ENCODE measurements at regions of chr3 and their contacts with region 1.

Region 1: GRCh38 chr3:170414202-170414663 is 4.4 kb upstream of the CLDN11 start:
- DNase-seq: peak; percentile 39 to 46 (median 43)
- H3K4me3 ChIP-seq: no peak overlapping the region
- H3K4me3 Mint-ChIP-seq: no peak overlapping the region
- H3K27ac ChIP-seq: no peak overlapping the region
- H3K27ac Mint-ChIP-seq: no peak overlapping the region
- H3K4me1 ChIP-seq: peaks cover 11% of the 10 kb centered on the region
- H3K4me1 Mint-ChIP-seq: peaks cover 4 to 5% (median 5%) of the 10 kb centered on the region in 4 donors
- H3K27me3 ChIP-seq: peaks cover 4% of the 10 kb centered on the region
- H3K27me3 Mint-ChIP-seq: peaks cover 18 to 22% of the 10 kb centered on the region in 2 donors

Region 2: GRCh38 chr3:169863458-169863899 is 550.8 kb before region 1 on chr3:
- CTCF ChIA-PET with region 1: no interaction called
- POLR2A ChIA-PET with region 1: no interaction called
- intact Hi-C with region 1: loop called (anchors 1 kb)
- DNase-seq: peak; percentile 54 to 71 (median 66)
- H3K4me3 ChIP-seq: no peak overlapping the region
- H3K4me3 Mint-ChIP-seq: no peak overlapping the region
- H3K27ac ChIP-seq: no peak overlapping the region
- H3K27ac Mint-ChIP-seq: peak overlapping the region in 2 of 7 donors; percentile 23 to 38
- H3K4me1 ChIP-seq: peaks cover 7% of the 10 kb centered on the region
- H3K4me1 Mint-ChIP-seq: peaks cover 4 to 15% (median 4%) of the 10 kb centered on the region in 4 donors
- H3K27me3 ChIP-seq: no peaks in the 10 kb centered on the region
- H3K27me3 Mint-ChIP-seq: peaks cover 3 to 9% of the 10 kb centered on the region in 2 donors

Region 3: GRCh38 chr3:170128977-170129431 is 285.2 kb before region 1 on chr3:
- CTCF ChIA-PET with region 1: no interaction called
- POLR2A ChIA-PET with region 1: no interaction called
- intact Hi-C with region 1: no loop called
- DNase-seq: no peak
- H3K4me3 ChIP-seq: no peak overlapping the region
- H3K4me3 Mint-ChIP-seq: peak overlapping the region in 6 of 8 donors; percentile 36 to 71 (median 63)
- H3K27ac ChIP-seq: no peak overlapping the region
- H3K27ac Mint-ChIP-seq: peak overlapping the region; percentile 20 to 90 (median 75)
- H3K4me1 ChIP-seq: peaks cover 23% of the 10 kb centered on the region
- H3K4me1 Mint-ChIP-seq: peaks cover 19 to 25% (median 22%) of the 10 kb centered on the region in 4 donors
- H3K27me3 ChIP-seq: no peaks in the 10 kb centered on the region
- H3K27me3 Mint-ChIP-seq: no peaks in the 10 kb centered on the region

Region 4: GRCh38 chr3:170307671-170308403 is 106.4 kb before region 1 on chr3:
- CTCF ChIA-PET with region 1: interaction called, 7 read pairs
- POLR2A ChIA-PET with region 1: no interaction called
- intact Hi-C with region 1: loop called (anchors 1 kb)
- DNase-seq: no peak
- H3K4me3 ChIP-seq: no peak overlapping the region
- H3K4me3 Mint-ChIP-seq: no peak overlapping the region
- H3K27ac ChIP-seq: no peak overlapping the region
- H3K27ac Mint-ChIP-seq: no peak overlapping the region
- H3K4me1 ChIP-seq: no peaks in the 10 kb centered on the region
- H3K4me1 Mint-ChIP-seq: peaks cover 0 to 1% (median 0%) of the 10 kb centered on the region in 4 donors
- H3K27me3 ChIP-seq: no peaks in the 10 kb centered on the region
- H3K27me3 Mint-ChIP-seq: no peaks in the 10 kb centered on the region

Region 5: GRCh38 chr3:170391108-170391507 is 23.1 kb before region 1 on chr3:
- CTCF ChIA-PET with region 1: interaction called, 10 read pairs
- POLR2A ChIA-PET with region 1: no interaction called
- intact Hi-C with region 1: no loop called
- DNase-seq: no peak
- H3K4me3 ChIP-seq: no peak overlapping the region
- H3K4me3 Mint-ChIP-seq: no peak overlapping the region
- H3K27ac ChIP-seq: no peak overlapping the region
- H3K27ac Mint-ChIP-seq: no peak overlapping the region
- H3K4me1 ChIP-seq: no peaks in the 10 kb centered on the region
- H3K4me1 Mint-ChIP-seq: peaks cover 0 to 3% (median 0%) of the 10 kb centered on the region in 4 donors
- H3K27me3 ChIP-seq: no peaks in the 10 kb centered on the region
- H3K27me3 Mint-ChIP-seq: no peaks in the 10 kb centered on the region

Region 6: GRCh38 chr3:170425491-170426239 is 11.4 kb after region 1 on chr3:
- CTCF ChIA-PET with region 1: interaction called, 24 read pairs
- POLR2A ChIA-PET with region 1: interaction called, 4 read pairs
- intact Hi-C with region 1: no loop called
- DNase-seq: no peak
- H3K4me3 ChIP-seq: no peak overlapping the region
- H3K4me3 Mint-ChIP-seq: no peak overlapping the region
- H3K27ac ChIP-seq: no peak overlapping the region
- H3K27ac Mint-ChIP-seq: no peak overlapping the region
- H3K4me1 ChIP-seq: peaks cover 12% of the 10 kb centered on the region
- H3K4me1 Mint-ChIP-seq: peaks cover 9 to 23% (median 14%) of the 10 kb centered on the region in 4 donors
- H3K27me3 ChIP-seq: no peaks in the 10 kb centered on the region
- H3K27me3 Mint-ChIP-seq: peaks cover 7 to 14% of the 10 kb centered on the region in 2 donors

Region 7: GRCh38 chr3:170454509-170454908 is 40.3 kb after region 1 on chr3:
- CTCF ChIA-PET with region 1: no interaction called
- POLR2A ChIA-PET with region 1: no interaction called
- intact Hi-C with region 1: no loop called
- DNase-seq: no peak
- H3K4me3 ChIP-seq: no peak overlapping the region
- H3K4me3 Mint-ChIP-seq: no peak overlapping the region
- H3K27ac ChIP-seq: no peak overlapping the region
- H3K27ac Mint-ChIP-seq: no peak overlapping the region
- H3K4me1 ChIP-seq: no peaks in the 10 kb centered on the region
- H3K4me1 Mint-ChIP-seq: no peaks in the 10 kb centered on the region
- H3K27me3 ChIP-seq: no peaks in the 10 kb centered on the region
- H3K27me3 Mint-ChIP-seq: peaks cover 6 to 12% of the 10 kb centered on the region in 2 donors

Region 8: GRCh38 chr3:170689893-170690660 is 275.8 kb after region 1 on chr3:
- CTCF ChIA-PET with region 1: interaction called, 3 read pairs
- POLR2A ChIA-PET with region 1: no interaction called
- intact Hi-C with region 1: loop called (anchors 1 kb)
- DNase-seq: peak in 4 of 5 donors; percentile 1 to 13 (median 7)
- H3K4me3 ChIP-seq: no peak overlapping the region
- H3K4me3 Mint-ChIP-seq: no peak overlapping the region
- H3K27ac ChIP-seq: no peak overlapping the region
- H3K27ac Mint-ChIP-seq: no peak overlapping the region
- H3K4me1 ChIP-seq: no peaks in the 10 kb centered on the region
- H3K4me1 Mint-ChIP-seq: no peaks in the 10 kb centered on the region
- H3K27me3 ChIP-seq: no peaks in the 10 kb centered on the region
- H3K27me3 Mint-ChIP-seq: no peaks in the 10 kb centered on the region

Region 9: DNA sequence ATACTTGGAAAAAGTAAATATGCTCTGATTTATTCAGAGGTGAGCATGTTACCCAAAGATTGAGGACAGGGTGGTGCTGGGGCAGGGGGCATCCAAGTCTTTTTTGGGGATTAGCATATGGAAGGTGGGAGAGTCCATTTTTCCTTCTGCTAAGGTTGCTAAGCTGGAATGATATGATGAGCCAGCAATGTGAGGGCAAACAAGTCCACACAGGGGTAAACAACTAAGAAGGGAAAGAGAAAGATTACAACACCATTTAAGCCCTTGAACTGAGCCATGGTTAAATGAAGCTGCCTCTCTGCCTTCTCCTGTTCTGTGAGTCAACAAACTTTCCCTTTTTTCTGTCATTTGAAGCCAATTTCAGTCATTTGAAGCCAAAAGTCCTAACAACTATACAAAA is 366.7 kb after region 1 on chr3:
- CTCF ChIA-PET with region 1: no interaction called
- POLR2A ChIA-PET with region 1: no interaction called
- intact Hi-C with region 1: no loop called
- DNase-seq: no peak
- H3K4me3 ChIP-seq: no peak overlapping the region
- H3K4me3 Mint-ChIP-seq: no peak overlapping the region
- H3K27ac ChIP-seq: no peak overlapping the region
- H3K27ac Mint-ChIP-seq: no peak overlapping the region
- H3K4me1 ChIP-seq: no peaks in the 10 kb centered on the region
- H3K4me1 Mint-ChIP-seq: no peaks in the 10 kb centered on the region
- H3K27me3 ChIP-seq: no peaks in the 10 kb centered on the region
- H3K27me3 Mint-ChIP-seq: peaks cover 20 to 27% of the 10 kb centered on the region in 2 donors

Region 10: DNA sequence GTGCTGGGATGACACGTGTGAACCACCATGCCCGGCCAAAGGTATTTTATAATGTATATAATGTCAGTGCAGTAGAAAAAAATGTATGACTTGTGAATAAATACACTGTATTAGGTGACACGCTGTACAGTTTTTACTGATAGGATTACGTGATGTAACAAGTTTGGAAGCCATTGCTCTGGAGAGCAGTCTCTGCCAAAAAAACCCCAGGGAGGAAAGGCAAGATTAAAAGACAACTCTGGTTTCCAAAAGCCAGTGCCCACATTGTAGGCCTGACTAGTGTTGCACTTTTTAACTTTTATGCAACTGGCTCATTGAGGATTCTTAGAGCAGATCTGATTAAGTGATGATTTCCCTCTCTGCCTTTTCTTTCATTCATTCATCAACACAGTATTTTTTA is 674.3 kb after region 1 on chr3:
- CTCF ChIA-PET with region 1: no interaction called
- POLR2A ChIA-PET with region 1: no interaction called
- intact Hi-C with region 1: no loop called
- DNase-seq: no peak
- H3K4me3 ChIP-seq: no peak overlapping the region
- H3K4me3 Mint-ChIP-seq: no peak overlapping the region
- H3K27ac ChIP-seq: no peak overlapping the region
- H3K27ac Mint-ChIP-seq: no peak overlapping the region
- H3K4me1 ChIP-seq: no peaks in the 10 kb centered on the region
- H3K4me1 Mint-ChIP-seq: peaks cover 0 to 4% (median 1%) of the 10 kb centered on the region in 4 donors
- H3K27me3 ChIP-seq: no peaks in the 10 kb centered on the region
- H3K27me3 Mint-ChIP-seq: no peaks in the 10 kb centered on the region

Region 11: DNA sequence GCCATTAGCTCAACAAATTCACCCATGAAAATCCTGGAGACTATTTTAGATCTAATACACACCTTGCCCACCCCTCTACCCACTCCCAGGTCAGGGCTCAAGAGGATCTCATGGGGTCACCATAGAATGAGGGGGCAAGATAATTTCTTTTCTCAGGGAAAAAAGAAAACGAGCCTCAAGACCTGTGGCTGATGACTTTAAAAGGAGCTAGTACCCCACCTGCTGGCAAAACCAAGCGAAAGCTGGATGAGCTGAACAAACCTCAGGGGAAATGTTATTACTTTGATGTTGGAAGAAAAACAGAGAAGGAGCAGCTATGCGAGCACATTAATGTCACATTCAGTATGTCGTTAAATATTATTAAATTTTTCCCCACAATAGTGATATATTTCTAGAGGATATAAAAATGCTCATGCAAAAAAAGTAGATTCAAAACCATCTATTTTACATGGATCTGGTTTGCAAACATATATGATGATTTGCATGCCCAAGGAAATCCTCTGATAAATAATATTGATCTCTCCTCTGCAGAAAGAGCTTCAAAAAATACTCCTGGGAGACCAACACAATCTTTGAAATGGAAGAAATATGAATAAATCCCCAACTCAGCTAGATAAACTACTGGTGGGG is 1358.3 kb after region 1 on chr3:
- CTCF ChIA-PET with region 1: interaction called, 10 read pairs
- POLR2A ChIA-PET with region 1: no interaction called
- intact Hi-C with region 1: loop called (anchors 5 kb)
- DNase-seq: peak; percentile 32 to 39 (median 36)
- H3K4me3 ChIP-seq: no peak overlapping the region
- H3K4me3 Mint-ChIP-seq: no peak overlapping the region
- H3K27ac ChIP-seq: no peak overlapping the region
- H3K27ac Mint-ChIP-seq: no peak overlapping the region
- H3K4me1 ChIP-seq: no peaks in the 10 kb centered on the region
- H3K4me1 Mint-ChIP-seq: peaks cover 0 to 6% (median 1%) of the 10 kb centered on the region in 4 donors
- H3K27me3 ChIP-seq: no peaks in the 10 kb centered on the region
- H3K27me3 Mint-ChIP-seq: peaks cover under 1 to 5% of the 10 kb centered on the region in 2 donors

Measured in CD4-positive, alpha-beta memory T cell (primary cell).